Sigmoid colon (tissue), 7 donors: ENCODE measurements at regions of chr15 and their contacts with region 1.

Region 1: DNA sequence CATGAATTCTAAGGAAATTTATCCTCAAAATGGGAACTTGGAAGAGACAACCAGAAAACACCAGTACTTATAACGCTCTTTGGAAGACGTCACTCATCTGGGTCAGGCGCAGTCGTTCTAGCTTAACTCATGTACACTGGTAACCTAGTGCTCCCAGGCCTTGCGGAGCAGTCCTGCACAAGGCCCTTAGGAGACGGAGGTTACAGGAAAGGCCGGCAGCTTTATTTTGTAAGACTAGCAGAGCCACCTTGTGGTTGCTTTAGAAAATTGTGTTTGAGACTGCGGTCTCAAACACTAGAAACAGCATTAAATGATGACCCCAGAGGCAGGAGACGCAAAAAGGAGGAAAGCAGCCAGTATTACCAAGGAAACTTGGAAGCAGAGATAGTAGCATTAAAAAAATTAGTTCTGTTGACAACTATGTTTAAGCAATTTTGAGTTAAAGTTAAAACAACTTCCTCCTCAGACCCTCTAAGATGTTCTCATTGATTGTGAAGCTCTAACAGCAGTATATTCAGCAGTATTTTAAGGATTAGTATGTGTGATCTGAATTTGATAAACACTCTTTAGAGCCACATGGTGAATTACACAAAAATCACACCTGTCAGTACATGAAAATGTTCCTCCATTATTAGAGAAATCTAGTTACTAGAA is 141.9 kb upstream of the C2CD4B start:
- DNase-seq: peak; percentile 79
- H3K4me3 ChIP-seq: no peak overlapping the region
- H3K27ac ChIP-seq: no peak overlapping the region
- H3K4me1 ChIP-seq: peaks cover 0 to 11% (median 6%) of the 10 kb centered on the region in 4 donors
- H3K27me3 ChIP-seq: no peaks in the 10 kb centered on the region
- CTCF ChIP-seq: peak; percentile 45 to 69 (median 64)
- EP300 ChIP-seq: no peak
- POLR2A ChIP-seq: no peak

Region 2: GRCh38 chr15:61871926-61872522 is 435.0 kb before region 1 on chr15:
- intact Hi-C with region 1: loop called (anchors 10 kb)
- DNase-seq: no peak
- H3K4me3 ChIP-seq: no peak overlapping the region
- H3K27ac ChIP-seq: no peak overlapping the region
- H3K4me1 ChIP-seq: no peaks in the 10 kb centered on the region
- H3K27me3 ChIP-seq: no peaks in the 10 kb centered on the region
- CTCF ChIP-seq: peak in 2 of 4 experiments; percentile 12 to 20
- EP300 ChIP-seq: no peak
- POLR2A ChIP-seq: no peak

Region 3: GRCh38 chr15:62071711-62072308 is 235.2 kb before region 1 on chr15:
- intact Hi-C with region 1: loop called (anchors 5 kb)
- DNase-seq: no peak
- H3K4me3 ChIP-seq: no peak overlapping the region
- H3K27ac ChIP-seq: no peak overlapping the region
- H3K4me1 ChIP-seq: peaks cover 0 to 23% (median 19%) of the 10 kb centered on the region in 4 donors
- H3K27me3 ChIP-seq: peaks cover 3 to 36% (median 20%) of the 10 kb centered on the region in 3 donors
- CTCF ChIP-seq: peak in 2 of 4 experiments; percentile 33 to 67
- EP300 ChIP-seq: no peak
- POLR2A ChIP-seq: no peak

Region 4: DNA sequence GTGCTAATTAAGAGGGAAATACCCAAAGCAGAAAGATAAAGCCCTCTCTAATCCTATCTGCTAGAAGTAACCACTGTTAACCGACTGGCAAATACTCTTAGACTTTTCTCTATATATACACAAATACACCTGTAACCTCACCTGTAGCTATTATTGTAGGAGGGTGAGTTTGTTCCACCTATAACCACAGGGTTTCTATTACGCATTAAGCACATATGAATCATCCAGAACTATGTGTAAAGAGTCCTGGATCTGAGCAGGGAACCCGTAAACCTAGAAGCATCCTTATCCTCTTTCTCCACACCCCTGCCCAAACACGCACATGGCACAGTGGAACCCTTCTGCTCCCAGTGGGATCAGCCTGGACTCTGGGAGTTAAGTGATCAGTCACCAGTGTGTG is 31.0 kb after region 1 on chr15:
- intact Hi-C with region 1: no loop called
- DNase-seq: no peak
- H3K4me3 ChIP-seq: no peak overlapping the region
- H3K27ac ChIP-seq: no peak overlapping the region
- H3K4me1 ChIP-seq: no peaks in the 10 kb centered on the region
- H3K27me3 ChIP-seq: no peaks in the 10 kb centered on the region
- CTCF ChIP-seq: no peak
- EP300 ChIP-seq: no peak
- POLR2A ChIP-seq: no peak

Region 5: GRCh38 chr15:62515696-62516395 is 208.9 kb after region 1 on chr15:
- intact Hi-C with region 1: no loop called
- DNase-seq: no peak
- H3K4me3 ChIP-seq: no peak overlapping the region
- H3K27ac ChIP-seq: no peak overlapping the region
- H3K4me1 ChIP-seq: peaks cover 0 to 13% (median 3%) of the 10 kb centered on the region in 4 donors
- H3K27me3 ChIP-seq: no peaks in the 10 kb centered on the region
- CTCF ChIP-seq: no peak
- EP300 ChIP-seq: no peak
- POLR2A ChIP-seq: no peak